SK-MEL-5 (cell line): ENCODE measurements at regions of chr7 and their contacts with region 1.

Region 1: GRCh38 chr7:15305002-15305600 is 256.7 kb downstream of the AGMO start:
- DNase-seq: peak; percentile 84

Region 2: GRCh38 chr7:15239801-15240200 is 65.3 kb before region 1 on chr7:
- in situ Hi-C with region 1: no loop called
- DNase-seq: no peak

Region 3: GRCh38 chr7:15720849-15721471 is 415.9 kb after region 1 on chr7:
- in situ Hi-C with region 1: loop called (anchors 25 kb)
- DNase-seq: peak; percentile 67

Region 4: DNA sequence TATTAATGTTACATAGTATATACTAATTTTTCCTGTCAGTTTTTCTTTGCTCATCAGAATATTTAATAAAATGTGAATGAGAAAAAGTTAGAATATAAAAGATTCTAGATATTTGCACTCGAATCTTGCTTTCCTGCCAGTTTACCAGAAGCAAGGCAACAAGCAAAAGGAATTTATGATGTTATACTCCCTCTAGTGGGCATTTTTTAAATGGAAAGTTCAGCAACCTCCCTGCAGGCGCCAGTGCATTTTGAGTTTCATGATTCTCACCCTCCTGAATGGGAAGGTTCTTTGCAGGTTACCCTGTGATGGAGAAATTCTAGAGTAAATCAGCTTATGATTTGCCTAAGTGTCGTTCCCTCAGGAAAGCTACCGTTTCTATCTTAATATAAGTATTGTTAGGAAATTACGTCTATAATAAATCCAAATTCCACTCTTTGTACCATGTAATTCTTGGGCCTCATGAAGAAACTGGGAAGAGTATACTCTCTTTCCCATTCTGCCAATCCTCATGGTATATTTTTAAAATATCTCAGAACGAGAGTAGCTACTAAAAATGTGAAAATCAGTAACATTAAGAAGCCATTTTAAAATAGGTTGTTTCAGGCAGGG is 766.3 kb after region 1 on chr7:
- in situ Hi-C with region 1: loop called (anchors 25 kb)
- DNase-seq: peak; percentile 84